ENCODE measurements at regions of chrX and their contacts with region 1.

Region 1: GRCh38 chrX:153319295-153320046 is 2.1 kb downstream of the PNMA6F start:
- DNase-seq: no peak
- ATAC-seq: no peak
- H3K4me3 ChIP-seq: no peak overlapping the region
- H3K27ac ChIP-seq: no peak overlapping the region
- H3K4me1 ChIP-seq: no peaks in the 10 kb centered on the region
- H3K27me3 ChIP-seq: peaks cover 0 to 33% (median 0%) of the 10 kb centered on the region in 7 donors
- CTCF ChIP-seq: no peak

Region 2: DNA sequence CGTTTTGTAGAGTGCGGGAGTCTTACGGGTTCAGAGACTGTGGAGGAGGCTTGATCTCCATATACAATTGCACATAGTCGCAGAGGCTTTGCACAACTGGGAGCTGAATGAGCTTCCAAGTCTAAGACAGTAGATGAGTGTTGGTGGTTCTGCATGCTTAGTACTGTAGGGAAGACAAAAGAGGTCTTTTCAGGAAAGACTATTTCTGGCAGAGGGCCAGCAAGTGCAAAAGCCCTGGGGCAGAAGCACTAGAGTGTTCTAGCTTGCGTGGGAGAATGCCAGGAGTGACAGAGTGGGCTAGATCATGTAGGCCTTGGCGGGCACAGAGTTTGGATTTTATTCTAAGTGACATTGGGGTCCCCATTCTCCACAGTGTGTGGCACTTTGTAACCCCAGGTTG is 349.9 kb before region 1 on chrX:
- intact Hi-C with region 1: no loop called
- DNase-seq: no peak
- ATAC-seq: no peak
- H3K4me3 ChIP-seq: no peak overlapping the region
- H3K27ac ChIP-seq: no peak overlapping the region
- H3K4me1 ChIP-seq: no peaks in the 10 kb centered on the region
- H3K27me3 ChIP-seq: peaks cover 0 to 8% (median 0%) of the 10 kb centered on the region in 7 donors
- CTCF ChIP-seq: no peak

Region 3: DNA sequence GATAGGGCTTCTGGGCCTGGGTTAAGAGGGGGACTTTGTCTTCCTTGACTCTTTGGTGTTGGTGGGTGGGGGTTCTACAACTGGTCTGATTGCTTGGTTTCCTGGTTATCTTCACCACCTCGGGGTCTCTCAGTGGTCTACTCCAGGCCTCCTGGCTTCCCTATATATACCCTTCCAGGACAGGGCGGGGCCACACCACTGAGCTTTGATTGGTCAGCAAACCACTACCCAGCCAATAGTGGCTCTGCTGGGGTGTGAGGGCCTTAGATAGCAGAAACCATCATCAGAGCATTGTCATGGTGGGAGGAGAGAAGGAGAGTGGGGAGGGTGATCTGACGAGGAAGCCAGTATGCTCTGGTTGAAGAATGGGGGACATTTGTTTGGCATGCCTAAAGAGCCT is 154.7 kb before region 1 on chrX:
- intact Hi-C with region 1: loop called in 1 of 10 experiments (anchors 10 kb)
- DNase-seq: no peak
- ATAC-seq: no peak
- H3K4me3 ChIP-seq: no peak overlapping the region
- H3K27ac ChIP-seq: no peak overlapping the region
- H3K4me1 ChIP-seq: no peaks in the 10 kb centered on the region
- H3K27me3 ChIP-seq: peaks cover 0 to 23% (median 0%) of the 10 kb centered on the region in 7 donors
- CTCF ChIP-seq: no peak

Region 4: GRCh38 chrX:153381684-153382532 is 62.4 kb after region 1 on chrX:
- intact Hi-C with region 1: loop called in 1 of 10 experiments (anchors 10 kb)
- DNase-seq: peak in 1 of 2 donors; percentile 15
- ATAC-seq: peak in 4 of 8 donors; percentile 30 to 42 (median 38)
- H3K4me3 ChIP-seq: no peak overlapping the region
- H3K27ac ChIP-seq: peak overlapping the region in 1 of 10 donors; percentile 50
- H3K4me1 ChIP-seq: peaks cover 0 to 4% (median 0%) of the 10 kb centered on the region in 9 donors
- H3K27me3 ChIP-seq: no peaks in the 10 kb centered on the region
- CTCF ChIP-seq: peak in 1 of 9 donors; percentile 9

Measured in heart right ventricle (tissue), 16 donors.